ENCODE measurements at regions of chr6 and their contacts with region 1.

Region 1: DNA sequence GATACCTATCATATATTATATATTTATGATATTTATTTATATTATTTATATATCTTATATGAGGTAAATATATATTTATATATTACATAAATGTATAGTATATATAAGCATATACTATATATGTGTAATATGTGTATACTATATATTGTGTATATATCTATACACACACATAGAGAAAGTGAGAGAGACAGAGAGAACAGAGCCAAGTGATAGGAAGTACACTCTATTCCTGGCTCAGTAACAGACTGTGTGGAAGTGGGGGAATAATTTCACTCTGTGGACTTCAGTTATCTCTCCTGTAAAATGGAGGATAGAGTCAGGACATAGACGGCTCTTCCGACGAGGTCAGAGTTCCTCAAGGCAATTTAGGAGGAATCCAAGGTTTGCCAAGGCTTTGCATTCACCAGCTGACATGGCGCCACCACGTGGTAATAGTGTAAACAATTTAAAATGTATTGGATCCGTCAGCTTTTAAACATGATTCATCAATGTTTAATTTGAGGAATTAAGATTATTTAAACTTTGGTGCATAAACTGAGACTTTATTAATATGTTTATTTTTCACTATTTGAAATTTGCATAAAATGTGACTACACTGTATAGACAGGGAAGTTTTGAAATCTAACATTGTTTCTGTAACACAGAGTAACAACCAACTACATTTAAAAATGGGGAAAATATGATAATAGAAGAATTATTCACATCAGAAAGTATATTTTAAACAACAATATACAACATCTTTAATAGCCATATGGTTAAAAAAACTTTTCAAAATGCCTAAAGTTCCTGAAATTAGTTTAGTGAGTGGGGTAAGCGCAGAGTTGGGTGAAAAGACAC is 75.4 kb upstream of the TMEM244 start:
- DNase-seq: peak; percentile 90
- H3K4me3 Mint-ChIP-seq: peak overlapping the region; percentile 41
- H3K27ac Mint-ChIP-seq: no peak overlapping the region
- H3K4me1 Mint-ChIP-seq: no peaks in the 10 kb centered on the region
- H3K27me3 Mint-ChIP-seq: no peaks in the 10 kb centered on the region
- CTCF ChIP-seq: peak; percentile 53

Region 2: GRCh38 chr6:129292836-129293235 is 643.7 kb before region 1 on chr6:
- CTCF ChIA-PET with region 1: no interaction called
- POLR2A ChIA-PET with region 1: no interaction called
- intact Hi-C with region 1: no loop called
- DNase-seq: no peak
- H3K4me3 Mint-ChIP-seq: no peak overlapping the region
- H3K27ac Mint-ChIP-seq: no peak overlapping the region
- H3K4me1 Mint-ChIP-seq: no peaks in the 10 kb centered on the region
- H3K27me3 Mint-ChIP-seq: peaks cover 32% of the 10 kb centered on the region
- CTCF ChIP-seq: no peak

Region 3: DNA sequence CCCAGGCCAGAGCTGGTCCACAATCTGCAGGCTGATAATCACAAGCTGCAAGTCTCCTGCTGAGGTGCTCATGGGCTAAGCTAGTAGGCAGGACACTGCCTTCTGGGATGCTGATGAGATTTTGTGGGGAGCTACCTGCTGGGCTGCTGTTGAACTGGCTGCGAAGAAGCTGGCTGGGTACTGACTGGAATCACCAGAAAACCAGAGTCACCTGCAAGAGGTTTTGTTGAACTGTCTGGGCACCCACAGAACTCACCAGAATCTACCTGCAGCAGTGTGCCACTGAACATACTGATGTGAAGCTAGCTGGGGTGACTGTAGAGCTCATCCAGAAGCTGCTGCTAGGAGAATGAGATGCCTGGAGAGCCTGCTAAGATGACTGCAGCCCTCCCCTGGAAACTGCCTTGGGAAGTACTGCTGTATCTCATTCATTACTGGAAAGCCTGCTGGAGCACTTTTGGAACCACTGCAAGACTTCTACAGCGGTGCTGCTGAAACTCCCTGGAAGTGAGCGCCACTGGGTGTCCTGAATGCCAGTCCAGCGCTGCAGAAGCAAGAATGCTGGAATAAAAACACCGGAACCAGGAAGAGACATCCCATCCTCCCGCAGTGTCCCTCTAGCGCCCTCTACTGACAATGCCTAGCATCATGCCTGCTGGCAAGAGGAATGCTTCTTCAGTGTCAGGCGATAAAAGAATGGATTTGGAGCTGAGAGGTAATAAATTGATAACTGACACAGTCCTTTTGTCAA is 161.7 kb before region 1 on chr6:
- CTCF ChIA-PET with region 1: no interaction called
- POLR2A ChIA-PET with region 1: no interaction called
- intact Hi-C with region 1: loop called (anchors 1 kb)
- DNase-seq: peak; percentile 79
- H3K4me3 Mint-ChIP-seq: no peak overlapping the region
- H3K27ac Mint-ChIP-seq: no peak overlapping the region
- H3K4me1 Mint-ChIP-seq: no peaks in the 10 kb centered on the region
- H3K27me3 Mint-ChIP-seq: no peaks in the 10 kb centered on the region
- CTCF ChIP-seq: peak; percentile 74

Region 4: GRCh38 chr6:129893640-129894039 is 42.9 kb before region 1 on chr6:
- CTCF ChIA-PET with region 1: interaction called, 12 read pairs
- POLR2A ChIA-PET with region 1: interaction called, 4 read pairs
- intact Hi-C with region 1: loop called (anchors 1 kb)
- DNase-seq: peak; percentile 47
- H3K4me3 Mint-ChIP-seq: no peak overlapping the region
- H3K27ac Mint-ChIP-seq: no peak overlapping the region
- H3K4me1 Mint-ChIP-seq: peaks cover 11% of the 10 kb centered on the region
- H3K27me3 Mint-ChIP-seq: no peaks in the 10 kb centered on the region
- CTCF ChIP-seq: peak; percentile 52

Measured in MCF 10A (cell line).